PC-9 (cell line): ENCODE measurements at regions of chr10 and their contacts with region 1.

Region 1: DNA sequence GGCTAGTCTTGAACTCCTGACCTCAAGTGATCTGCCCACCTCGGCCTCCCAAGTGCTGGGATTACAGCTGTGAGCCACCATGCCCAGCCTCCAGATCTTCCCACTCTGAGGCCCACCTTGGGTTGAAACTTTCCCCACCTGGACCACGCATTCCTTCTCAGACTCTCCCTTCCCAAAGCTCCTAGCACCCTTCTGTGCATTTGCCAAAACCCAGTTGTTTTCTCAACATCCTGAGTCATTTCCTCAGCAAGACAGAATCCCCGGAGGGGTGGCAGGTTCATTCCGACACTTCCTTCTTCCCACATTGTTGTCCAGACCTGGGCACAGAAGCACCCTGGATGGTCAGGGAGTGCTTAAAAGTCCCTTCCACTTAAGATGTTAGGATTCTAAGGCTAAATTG is 28.9 kb downstream of the BAG3 start:
- DNase-seq: peak; percentile 66 to 88
- H3K4me3 ChIP-seq: no peak overlapping the region; the same call in 1 of the 2 replicates
- H3K27ac ChIP-seq: peak overlapping the region; percentile 99
- H3K4me1 ChIP-seq: peaks cover 69% of the 10 kb centered on the region
- H3K27me3 ChIP-seq: no peaks in the 10 kb centered on the region
- CTCF ChIP-seq: no peak

Region 2: GRCh38 chr10:119658253-119658673 is 21.8 kb before region 1 on chr10:
- CTCF ChIA-PET with region 1: no interaction called
- POLR2A ChIA-PET with region 1: no interaction called
- intact Hi-C with region 1: loop called (anchors 1 kb)
- DNase-seq: peak; percentile 67 to 79
- H3K4me3 ChIP-seq: peak overlapping the region; percentile 36; the same call in 1 of the 2 replicates
- H3K27ac ChIP-seq: peak overlapping the region; percentile 76
- H3K4me1 ChIP-seq: peaks cover 96% of the 10 kb centered on the region
- H3K27me3 ChIP-seq: no peaks in the 10 kb centered on the region
- CTCF ChIP-seq: no peak

Region 3: DNA sequence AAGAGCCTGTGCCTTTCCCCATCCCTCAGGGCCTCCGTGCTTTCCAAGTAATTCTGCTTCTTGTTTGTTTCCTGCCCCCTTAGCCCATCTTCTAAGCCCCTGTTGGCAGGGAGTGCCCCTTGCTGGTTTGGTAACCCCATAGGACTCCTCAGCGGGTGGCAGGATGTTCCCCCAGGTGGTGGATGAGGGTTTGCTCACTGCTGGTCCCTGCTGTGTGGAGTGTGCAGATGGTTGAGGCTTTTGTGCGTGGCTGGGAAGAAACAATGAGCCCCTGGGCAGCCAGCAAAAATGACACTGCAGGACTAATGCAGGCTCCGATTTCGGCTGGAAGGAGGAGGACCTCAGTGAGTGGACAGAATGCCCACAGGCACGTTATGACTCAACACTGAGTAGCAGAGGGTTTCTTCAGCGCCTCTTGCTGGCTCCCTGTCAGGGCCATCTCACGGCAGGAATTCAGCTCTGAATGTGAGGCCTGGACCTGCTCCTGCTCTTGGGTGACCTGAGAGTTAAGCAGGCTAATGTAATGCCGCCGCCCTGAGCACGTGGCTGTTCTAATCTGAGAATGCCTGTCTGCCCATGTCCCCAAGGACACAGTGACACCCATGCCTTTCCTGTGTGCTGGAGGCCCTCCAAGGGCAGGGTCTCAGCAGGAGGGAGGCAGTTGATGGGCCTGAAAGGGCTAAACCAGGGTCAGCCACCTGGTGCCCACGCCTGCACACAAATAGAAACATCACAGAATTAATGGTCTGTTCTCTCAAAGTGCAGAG is 12.3 kb before region 1 on chr10:
- CTCF ChIA-PET with region 1: interaction called, 5 read pairs
- POLR2A ChIA-PET with region 1: no interaction called
- intact Hi-C with region 1: loop called (anchors 2 kb)
- DNase-seq: peak; percentile 88 to 93
- H3K4me3 ChIP-seq: peak overlapping the region; percentile 31; the same call in 1 of the 2 replicates
- H3K27ac ChIP-seq: peak overlapping the region; percentile 90
- H3K4me1 ChIP-seq: peaks cover 90% of the 10 kb centered on the region
- H3K27me3 ChIP-seq: no peaks in the 10 kb centered on the region
- CTCF ChIP-seq: no peak

Region 4: DNA sequence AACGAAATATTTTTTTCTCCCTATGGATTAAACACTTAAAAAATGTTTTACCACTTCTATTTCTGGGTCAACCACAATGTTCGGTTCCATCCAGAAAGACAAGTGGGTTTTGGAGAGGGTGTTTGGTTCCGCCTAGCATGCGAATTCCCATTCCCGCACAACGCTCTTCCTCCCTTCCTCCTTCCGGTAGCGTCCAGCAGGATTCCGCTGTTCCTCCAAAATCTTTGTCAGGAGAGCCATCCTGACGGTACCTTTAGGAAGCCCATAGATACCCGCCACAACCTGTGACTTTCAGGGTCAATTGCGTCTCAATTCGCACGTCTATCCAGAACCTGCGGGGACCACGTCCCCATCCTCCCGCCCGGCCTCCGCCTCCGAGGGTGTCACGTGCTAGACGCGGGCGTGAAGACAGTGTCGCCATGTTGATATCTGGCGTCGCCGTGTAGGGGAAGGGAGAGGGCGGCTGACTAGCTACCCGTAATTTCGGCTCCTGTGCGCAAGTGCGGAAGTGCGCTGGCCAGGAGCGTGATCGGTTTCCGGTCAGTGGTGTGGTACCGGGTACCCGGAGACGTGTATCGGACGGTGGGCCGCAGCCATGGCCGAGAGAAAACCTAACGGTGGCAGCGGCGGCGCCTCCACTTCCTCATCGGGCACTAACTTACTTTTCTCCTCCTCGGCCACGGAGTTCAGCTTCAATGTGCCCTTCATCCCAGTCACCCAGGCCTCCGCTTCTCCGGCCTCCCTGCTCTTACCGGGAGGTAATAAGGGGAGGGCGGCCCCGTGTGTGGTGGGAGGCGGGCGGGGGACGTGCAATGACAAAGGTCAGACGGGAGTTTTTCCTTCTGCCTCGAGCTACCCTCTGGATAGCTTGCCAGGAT is 212.4 kb after region 1 on chr10 and contains the start of gene SEC23IP:
- CTCF ChIA-PET with region 1: no interaction called
- POLR2A ChIA-PET with region 1: interaction called, 15 read pairs
- intact Hi-C with region 1: no loop called
- DNase-seq: peak; percentile 85 to 86
- H3K4me3 ChIP-seq: peak within 1 kb of the TSS; percentile 91
- H3K27ac ChIP-seq: peak within 1 kb of the TSS; percentile 49; the same call in 1 of the 2 replicates
- H3K4me1 ChIP-seq: peaks cover 12% of the 10 kb centered on the region; the same call in 1 of the 2 replicates
- H3K27me3 ChIP-seq: no peaks in the 10 kb centered on the region
- CTCF ChIP-seq: no peak
- total RNA-seq, gene SEC23IP: 19.9 and 33.2 TPM in 2 replicates